Dorsolateral prefrontal cortex (tissue), 120 donors: ENCODE measurements at regions of chr11 and their contacts with region 1.

Region 1: GRCh38 chr11:57800444-57801182 is 39.0 kb downstream of the CTNND1 start:
- DNase-seq: no peak
- H3K4me3 ChIP-seq: peak overlapping the region in 8 of 59 donors; percentile 1 to 30 (median 13)
- H3K27ac ChIP-seq: peak overlapping the region in 58 of 59 donors; percentile 3 to 91 (median 78)
- H3K27me3 ChIP-seq: no peaks in the 10 kb centered on the region
- CTCF ChIP-seq: peak; percentile 81 to 99 (median 94)

Region 2: GRCh38 chr11:57567515-57568329 is 232.9 kb before region 1 on chr11 and contains the start of gene UBE2L6:
- intact Hi-C with region 1: loop called (anchors 5 to 10 kb)
- DNase-seq: peak; percentile 51 to 84 (median 70)
- H3K4me3 ChIP-seq: peak within 1 kb of the TSS; percentile 65 to 98 (median 92)
- H3K27ac ChIP-seq: peak within 1 kb of the TSS; percentile 66 to 98 (median 92)
- H3K27me3 ChIP-seq: no peaks in the 10 kb centered on the region
- CTCF ChIP-seq: peak in 34 of 56 donors; percentile 77 to 95 (median 88)
- total RNA-seq, gene UBE2L6: 40.6 to 139 (median 59.0) TPM

Region 3: DNA sequence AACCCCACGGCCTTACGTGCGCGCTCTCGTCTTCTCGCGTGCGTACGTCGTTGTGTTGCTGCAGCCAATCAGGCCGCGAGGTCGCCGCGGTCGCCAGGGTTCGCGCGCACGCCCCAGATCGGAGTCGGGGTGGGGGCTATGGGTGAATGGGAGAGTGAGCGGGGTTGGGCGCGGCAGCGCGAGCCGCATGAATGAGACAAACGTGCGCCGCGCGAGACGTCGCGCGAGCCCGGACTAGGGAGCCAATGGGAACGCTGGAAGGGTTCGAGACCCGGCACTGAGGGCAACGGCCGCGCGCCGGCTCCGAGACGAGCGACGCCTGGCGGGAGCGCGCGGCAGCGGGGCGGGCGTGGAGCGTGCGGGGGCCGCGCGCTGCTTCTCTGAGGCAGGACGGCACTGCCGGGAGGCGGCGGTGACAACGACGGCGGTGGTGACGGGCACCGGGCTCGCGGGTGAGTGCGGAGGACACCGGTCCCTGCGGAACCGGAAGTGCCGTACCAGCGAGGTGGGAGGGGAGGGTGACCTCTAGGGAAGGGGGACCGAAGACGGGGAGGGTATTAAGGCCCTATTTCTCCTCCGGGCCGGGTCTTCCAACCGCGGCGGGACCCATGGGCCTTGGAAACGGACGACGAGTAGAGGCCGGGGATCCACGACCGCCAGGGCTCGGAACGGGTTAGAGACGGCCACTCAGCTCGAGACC is 132.7 kb before region 1 on chr11 and contains the start of gene ZDHHC5:
- intact Hi-C with region 1: loop called in 1 of 2 experiments (anchors 5 kb)
- DNase-seq: peak; percentile 98 to 100 (median 99)
- H3K4me3 ChIP-seq: peak within 1 kb of the TSS; percentile 73 to 100 (median 96)
- H3K27ac ChIP-seq: peak within 1 kb of the TSS; percentile 93 to 100 (median 99)
- H3K27me3 ChIP-seq: no peaks in the 10 kb centered on the region
- CTCF ChIP-seq: peak in 55 of 56 donors; percentile 19 to 80 (median 60)
- total RNA-seq, gene ZDHHC5: 21.3 to 46.9 (median 34.3) TPM

Region 4: GRCh38 chr11:57751676-57752253 is 48.8 kb before region 1 on chr11 and contains the start of gene BTBD18:
- intact Hi-C with region 1: loop called (anchors 5 to 10 kb)
- DNase-seq: no peak
- H3K4me3 ChIP-seq: no peak within 1 kb of the TSS
- H3K27ac ChIP-seq: peak within 1 kb of the TSS in 4 of 59 donors; percentile 36 to 46 (median 42)
- H3K27me3 ChIP-seq: no peaks in the 10 kb centered on the region
- CTCF ChIP-seq: peak in 52 of 56 donors; percentile 26 to 65 (median 46)
- total RNA-seq, gene BTBD18: not detected

Region 5: DNA sequence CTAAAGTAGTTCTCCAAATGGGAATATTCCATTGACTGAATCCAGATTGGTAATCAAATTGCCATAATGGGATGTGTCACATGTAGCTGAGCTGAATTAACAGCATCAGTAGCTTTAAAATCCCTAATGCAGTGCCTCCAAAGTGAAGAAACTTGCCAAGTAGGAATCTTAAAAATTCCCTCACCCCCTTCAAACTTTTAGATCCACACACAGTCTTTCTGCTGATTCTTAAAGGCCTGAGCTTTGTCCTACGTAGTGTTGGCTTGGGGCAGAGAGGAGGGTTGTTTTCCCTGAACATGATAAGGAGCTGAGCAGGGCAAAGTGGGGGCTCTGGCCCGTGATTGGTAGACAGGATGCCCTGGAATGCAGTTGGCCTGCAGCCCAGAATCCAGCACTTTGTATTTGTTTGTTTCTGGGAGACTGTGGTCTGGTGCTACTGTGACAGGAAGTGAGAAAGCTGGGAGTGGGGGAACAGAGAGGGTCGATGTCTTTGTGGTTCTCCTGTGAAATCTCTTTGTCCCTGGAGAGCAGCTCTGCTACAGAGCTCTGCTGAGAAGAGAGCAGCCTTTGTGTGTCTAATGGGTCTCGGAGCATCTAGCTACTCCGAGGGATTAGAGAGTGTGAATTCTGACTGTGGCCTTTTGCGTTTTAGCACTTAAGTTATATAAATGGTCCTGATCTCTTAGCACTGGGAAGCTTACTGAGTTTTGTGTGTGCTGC is 22.1 kb before region 1 on chr11:
- intact Hi-C with region 1: loop called in 1 of 2 experiments (anchors 2 kb)
- DNase-seq: peak; percentile 48 to 86 (median 74)
- H3K4me3 ChIP-seq: peak overlapping the region in 57 of 59 donors; percentile 2 to 61 (median 34)
- H3K27ac ChIP-seq: peak overlapping the region; percentile 52 to 95 (median 90)
- H3K27me3 ChIP-seq: no peaks in the 10 kb centered on the region
- CTCF ChIP-seq: peak in 5 of 56 donors; percentile 5 to 27 (median 9)